Endothelial cell of umbilical vein (primary cell): ENCODE measurements at regions of chr1 and their contacts with region 1.

Region 1: DNA sequence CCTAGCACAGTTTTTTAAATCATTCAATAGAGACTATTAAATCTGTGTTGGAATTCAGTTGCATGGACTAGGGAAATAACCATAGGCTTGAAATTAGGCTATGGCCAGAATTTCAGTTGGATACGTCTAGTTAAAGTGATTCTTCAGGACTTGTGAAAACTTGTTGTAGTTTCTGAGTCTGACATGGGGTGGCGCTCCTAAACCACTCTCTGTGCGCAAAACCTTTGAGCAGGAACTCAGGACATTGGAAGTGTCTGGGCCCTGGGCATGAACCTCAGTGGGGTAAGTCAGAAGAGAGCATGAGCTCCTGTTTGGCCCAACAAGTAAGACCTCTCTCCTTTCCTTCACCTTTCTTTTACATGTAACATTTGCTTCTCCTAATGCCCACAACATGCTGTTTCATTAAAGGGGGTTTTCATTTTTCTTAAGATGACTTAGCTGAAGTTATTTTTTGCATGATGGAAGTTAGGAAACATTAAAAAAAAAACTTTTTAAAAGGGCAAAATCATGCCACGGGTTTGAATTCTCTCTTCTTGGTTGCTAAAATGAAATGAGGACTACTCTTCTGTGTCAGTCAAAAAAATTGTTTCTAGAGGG is 17.1 kb upstream of the CCDC190 start:
- DNase-seq: peak; percentile 85
- H3K4me3 ChIP-seq: no peak overlapping the region
- H3K27ac ChIP-seq: no peak overlapping the region
- H3K4me1 ChIP-seq: peaks cover 24% of the 10 kb centered on the region
- H3K27me3 ChIP-seq: no peaks in the 10 kb centered on the region
- CTCF ChIP-seq: peak; percentile 71 to 80
- POLR2A ChIP-seq: no peak

Region 2: DNA sequence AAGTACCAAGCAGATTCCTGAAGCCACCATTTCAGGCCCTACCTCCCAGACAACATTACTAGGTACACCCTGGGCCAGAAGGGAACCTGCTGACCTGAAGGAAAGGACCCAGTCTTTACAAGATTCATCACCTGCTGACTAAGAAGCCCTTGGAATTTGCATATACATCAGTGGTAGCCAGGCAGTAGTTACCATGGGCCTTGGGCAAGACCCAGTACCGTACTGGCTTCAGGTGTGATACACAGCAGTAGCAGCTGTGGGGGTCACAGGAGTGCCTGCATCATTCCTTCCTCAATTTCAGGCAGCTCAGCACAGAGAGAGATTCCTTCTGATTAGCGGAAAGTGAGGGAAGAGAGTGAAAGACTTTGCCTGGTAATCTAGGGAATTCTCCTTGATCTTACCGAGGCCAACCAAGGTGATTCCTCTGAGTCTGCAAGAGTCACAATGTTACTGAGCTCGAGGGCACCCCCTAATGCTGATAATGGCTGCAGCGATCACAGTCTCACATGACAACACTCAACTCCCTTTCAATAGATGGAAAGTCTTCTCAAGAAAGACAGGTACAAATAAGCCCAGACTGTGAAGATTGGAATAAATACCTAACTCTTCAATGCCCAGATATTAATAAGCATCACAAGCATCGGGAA is 402.4 kb before region 1 on chr1:
- CTCF ChIA-PET with region 1: no interaction called
- POLR2A ChIA-PET with region 1: no interaction called
- dilution Hi-C with region 1: no loop called
- intact Hi-C with region 1: no loop called
- DNase-seq: no peak
- H3K4me3 ChIP-seq: no peak overlapping the region
- H3K27ac ChIP-seq: no peak overlapping the region
- H3K4me1 ChIP-seq: no peaks in the 10 kb centered on the region
- H3K27me3 ChIP-seq: peaks cover 0 to 2% of the 10 kb centered on the region in 2 experiments
- CTCF ChIP-seq: no peak
- POLR2A ChIP-seq: no peak

Region 3: GRCh38 chr1:162596514-162597170 is 281.5 kb before region 1 on chr1:
- CTCF ChIA-PET with region 1: no interaction called
- POLR2A ChIA-PET with region 1: no interaction called
- dilution Hi-C with region 1: no loop called
- intact Hi-C with region 1: no loop called
- DNase-seq: no peak
- H3K4me3 ChIP-seq: no peak overlapping the region
- H3K27ac ChIP-seq: no peak overlapping the region
- H3K4me1 ChIP-seq: no peaks in the 10 kb centered on the region
- H3K27me3 ChIP-seq: no peaks in the 10 kb centered on the region
- CTCF ChIP-seq: no peak
- POLR2A ChIP-seq: no peak

Region 4: DNA sequence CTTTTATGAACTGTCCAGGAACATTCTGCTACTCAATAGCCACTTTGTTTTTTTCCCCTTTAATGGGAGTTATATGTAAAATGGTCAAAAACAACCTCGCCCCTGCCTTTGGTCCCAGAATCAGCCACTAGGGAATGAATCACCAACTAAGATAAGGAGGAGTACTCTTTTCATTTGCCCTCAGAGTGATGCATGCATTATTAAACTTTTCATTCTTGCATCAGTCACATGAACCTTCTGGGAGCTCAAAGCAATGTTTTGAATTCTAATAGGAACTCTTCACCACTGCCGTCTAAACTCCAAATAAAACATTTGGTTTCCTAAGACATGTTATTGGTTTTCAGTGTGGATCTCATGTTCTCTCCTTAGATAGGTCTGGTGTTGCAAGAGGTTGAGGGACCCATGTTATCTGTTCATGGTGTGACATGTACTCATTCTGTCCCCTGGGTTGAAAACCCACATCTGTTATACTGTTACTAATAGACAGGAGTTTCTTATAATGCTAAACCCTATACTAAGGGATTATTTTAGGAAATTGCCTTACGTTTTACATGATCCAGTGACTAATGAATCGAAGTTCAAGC is 105.4 kb before region 1 on chr1:
- CTCF ChIA-PET with region 1: no interaction called
- POLR2A ChIA-PET with region 1: no interaction called
- dilution Hi-C with region 1: no loop called
- intact Hi-C with region 1: no loop called
- DNase-seq: no peak
- H3K4me3 ChIP-seq: no peak overlapping the region
- H3K27ac ChIP-seq: no peak overlapping the region
- H3K4me1 ChIP-seq: no peaks in the 10 kb centered on the region
- H3K27me3 ChIP-seq: no peaks in the 10 kb centered on the region
- CTCF ChIP-seq: no peak
- POLR2A ChIP-seq: no peak

Region 5: GRCh38 chr1:162847839-162848453 is 30.2 kb before region 1 on chr1:
- CTCF ChIA-PET with region 1: interaction called, 80 read pairs
- POLR2A ChIA-PET with region 1: no interaction called
- dilution Hi-C with region 1: no loop called
- intact Hi-C with region 1: no loop called
- DNase-seq: peak; percentile 78
- H3K4me3 ChIP-seq: no peak overlapping the region
- H3K27ac ChIP-seq: no peak overlapping the region
- H3K4me1 ChIP-seq: no peaks in the 10 kb centered on the region
- H3K27me3 ChIP-seq: no peaks in the 10 kb centered on the region
- CTCF ChIP-seq: peak; percentile 78 to 82
- POLR2A ChIP-seq: no peak

Region 6: GRCh38 chr1:162984699-162985098 is 106.6 kb after region 1 on chr1:
- CTCF ChIA-PET with region 1: interaction called, 5 read pairs
- POLR2A ChIA-PET with region 1: no interaction called
- dilution Hi-C with region 1: no loop called
- intact Hi-C with region 1: loop called (anchors 2 kb)
- DNase-seq: peak; percentile 88
- H3K4me3 ChIP-seq: no peak overlapping the region
- H3K27ac ChIP-seq: peak overlapping the region; percentile 75
- H3K4me1 ChIP-seq: peaks cover 27% of the 10 kb centered on the region
- H3K27me3 ChIP-seq: no peaks in the 10 kb centered on the region
- CTCF ChIP-seq: no peak
- POLR2A ChIP-seq: peak; percentile 28

Region 7: GRCh38 chr1:163147019-163147418 is 268.9 kb after region 1 on chr1:
- CTCF ChIA-PET with region 1: interaction called, 11 read pairs
- POLR2A ChIA-PET with region 1: no interaction called
- dilution Hi-C with region 1: no loop called
- intact Hi-C with region 1: no loop called
- DNase-seq: peak; percentile 90
- H3K4me3 ChIP-seq: no peak overlapping the region
- H3K27ac ChIP-seq: peak overlapping the region; percentile 72
- H3K4me1 ChIP-seq: peaks cover 13% of the 10 kb centered on the region
- H3K27me3 ChIP-seq: no peaks in the 10 kb centered on the region
- CTCF ChIP-seq: no peak
- POLR2A ChIP-seq: no peak

Region 8: GRCh38 chr1:164558461-164559341 is 1680.6 kb after region 1 on chr1 and contains the start of gene PBX1:
- CTCF ChIA-PET with region 1: no interaction called
- POLR2A ChIA-PET with region 1: no interaction called
- dilution Hi-C with region 1: no loop called
- intact Hi-C with region 1: loop called (anchors 5 kb)
- DNase-seq: peak; percentile 99
- H3K4me3 ChIP-seq: peak within 1 kb of the TSS; percentile 88 to 99 (median 99)
- H3K27ac ChIP-seq: peak within 1 kb of the TSS; percentile 68
- H3K4me1 ChIP-seq: peaks cover 40% of the 10 kb centered on the region
- H3K27me3 ChIP-seq: no peaks in the 10 kb centered on the region
- CTCF ChIP-seq: no peak
- POLR2A ChIP-seq: peak; percentile 65
- total RNA-seq, gene PBX1: 22.2 and 24.1 TPM in 2 replicates